ENCODE measurements at regions of chr10 and their contacts with region 1.

Region 1: GRCh38 chr10:51074238-51075028 is at the start of gene PRKG1:
- DNase-seq: peak; percentile 16 to 92
- H3K4me3 ChIP-seq: peak within 1 kb of the TSS; percentile 90 to 94
- H3K27ac ChIP-seq: peak within 1 kb of the TSS; percentile 96
- H3K4me1 ChIP-seq: peaks cover 4 to 12% of the 10 kb centered on the region in 2 donors
- H3K27me3 ChIP-seq: no peaks in the 10 kb centered on the region
- CTCF ChIP-seq: no peak
- total RNA-seq, gene PRKG1: 50.2 TPM

Region 2: GRCh38 chr10:51422311-51423120 is 348.1 kb after region 1 on chr10:
- intact Hi-C with region 1: loop called (anchors 5 kb)
- DNase-seq: peak in 1 of 2 donors; percentile 79
- H3K4me3 ChIP-seq: peak overlapping the region; percentile 14 to 17
- H3K27ac ChIP-seq: peak overlapping the region; percentile 76 to 78
- H3K4me1 ChIP-seq: peaks cover 0 to 38% of the 10 kb centered on the region in 2 donors
- H3K27me3 ChIP-seq: no peaks in the 10 kb centered on the region
- CTCF ChIP-seq: peak; percentile 57 to 82 (median 75)

Region 3: GRCh38 chr10:51950371-51950995 is 876.0 kb after region 1 on chr10:
- intact Hi-C with region 1: loop called (anchors 10 kb)
- DNase-seq: no peak
- H3K4me3 ChIP-seq: no peak overlapping the region
- H3K27ac ChIP-seq: peak overlapping the region; percentile 62 to 72
- H3K4me1 ChIP-seq: peaks cover 3 to 29% of the 10 kb centered on the region in 2 donors
- H3K27me3 ChIP-seq: no peaks in the 10 kb centered on the region
- CTCF ChIP-seq: no peak

Region 4: DNA sequence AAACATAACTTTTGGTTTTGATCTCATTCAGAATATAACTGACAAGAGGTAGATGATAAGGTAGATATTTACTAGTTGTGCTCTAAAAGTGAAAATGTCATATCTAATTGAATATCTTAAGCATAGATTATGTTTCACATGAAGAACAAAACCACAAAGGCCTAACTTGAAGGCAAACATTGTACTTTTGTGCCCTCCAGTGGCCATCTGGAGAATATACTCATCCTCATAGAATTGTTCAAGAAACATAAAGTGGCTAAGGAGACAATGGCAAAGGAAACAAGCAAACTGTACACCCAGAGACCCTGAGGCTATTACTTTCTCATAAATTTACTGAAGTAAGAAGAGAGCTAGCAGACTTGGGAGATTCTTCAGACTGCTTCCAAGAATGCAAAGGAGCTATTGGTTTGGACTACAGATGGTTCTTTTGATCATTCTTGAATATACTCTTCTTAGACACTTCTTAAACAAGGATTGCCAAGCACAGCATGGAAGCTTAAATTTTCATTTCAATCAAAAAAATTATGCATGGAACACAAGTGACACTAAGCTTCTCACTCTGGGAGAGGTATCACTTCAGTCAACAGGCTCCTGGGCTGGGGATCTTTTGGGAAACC is 1141.4 kb after region 1 on chr10:
- intact Hi-C with region 1: loop called (anchors 5 kb)
- DNase-seq: no peak
- H3K4me3 ChIP-seq: no peak overlapping the region
- H3K27ac ChIP-seq: peak overlapping the region in 1 of 2 donors; percentile 63
- H3K4me1 ChIP-seq: peaks cover 4 to 22% of the 10 kb centered on the region in 2 donors
- H3K27me3 ChIP-seq: no peaks in the 10 kb centered on the region
- CTCF ChIP-seq: peak; percentile 66 to 68 (median 67)